ENCODE measurements at regions of chr10 and their contacts with region 1.

Region 1: GRCh38 chr10:77165445-77166208 is 472.0 kb downstream of the KCNMA1 start:
- H3K4me3 ChIP-seq: no peak overlapping the region
- H3K27ac ChIP-seq: no peak overlapping the region
- H3K4me1 ChIP-seq: peaks cover 4% of the 10 kb centered on the region; the same call in 1 of the 2 replicates
- CTCF ChIP-seq: peak; percentile 67

Region 2: DNA sequence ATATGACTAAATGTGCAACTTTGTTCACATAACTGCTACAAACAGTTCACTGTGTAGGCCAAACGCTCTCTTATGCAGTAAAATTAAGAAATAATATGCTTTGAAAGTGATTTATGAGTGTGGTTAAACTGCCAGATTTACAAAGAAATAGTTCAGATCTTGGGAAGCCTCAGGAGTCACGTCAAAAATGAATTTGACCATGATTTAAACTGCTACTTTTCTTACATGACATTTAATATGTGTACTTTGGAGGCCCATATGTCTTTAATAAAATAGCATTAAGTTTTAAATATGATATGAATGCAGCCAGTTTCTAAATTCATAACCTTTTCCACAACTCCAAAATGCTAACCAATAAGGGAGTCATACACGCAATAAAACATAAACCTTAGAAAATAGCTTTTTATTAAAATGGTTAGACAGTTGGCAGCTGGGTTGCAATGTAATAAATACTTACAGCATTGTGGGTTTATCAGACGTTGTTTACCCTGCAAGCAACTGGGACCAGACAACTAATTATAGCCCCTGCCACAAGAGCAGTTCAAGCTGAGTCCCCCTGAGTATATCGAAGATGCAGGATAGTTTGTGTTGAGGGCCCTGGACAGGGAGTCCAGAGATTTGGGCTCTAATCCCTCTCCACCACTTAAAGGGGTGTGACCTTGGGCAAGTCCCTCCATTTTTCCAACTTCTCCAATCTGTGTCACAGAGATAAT is 1093.8 kb before region 1 on chr10:
- CTCF ChIA-PET with region 1: no interaction called
- POLR2A ChIA-PET with region 1: no interaction called
- H3K4me3 ChIP-seq: no peak overlapping the region
- H3K27ac ChIP-seq: no peak overlapping the region
- H3K4me1 ChIP-seq: no peaks in the 10 kb centered on the region
- CTCF ChIP-seq: no peak

Region 3: GRCh38 chr10:77188521-77188920 is 22.9 kb after region 1 on chr10:
- CTCF ChIA-PET with region 1: interaction called, 10 read pairs
- POLR2A ChIA-PET with region 1: no interaction called
- H3K4me3 ChIP-seq: no peak overlapping the region
- H3K27ac ChIP-seq: no peak overlapping the region
- H3K4me1 ChIP-seq: peaks cover 4% of the 10 kb centered on the region
- CTCF ChIP-seq: no peak

Region 4: DNA sequence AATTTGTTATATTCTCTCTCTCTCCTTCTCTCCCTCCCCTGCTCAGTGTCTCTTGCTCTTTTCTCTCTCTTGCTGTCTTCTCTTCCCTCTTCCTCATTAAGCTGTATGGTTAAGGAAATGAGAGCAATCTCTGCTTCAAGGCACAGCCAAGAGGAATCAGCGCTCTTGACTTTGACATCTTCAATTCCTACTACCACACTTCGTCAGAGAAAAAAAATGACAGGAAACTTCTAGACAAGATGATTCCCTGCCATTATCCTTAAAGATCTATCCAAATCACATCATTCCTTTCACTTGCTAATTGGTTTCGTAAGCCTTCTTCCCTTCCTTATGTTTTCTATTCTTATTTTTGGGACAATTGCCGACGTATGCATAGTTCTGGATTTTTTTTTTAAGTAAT is 47.0 kb after region 1 on chr10:
- CTCF ChIA-PET with region 1: no interaction called
- POLR2A ChIA-PET with region 1: no interaction called
- H3K4me3 ChIP-seq: no peak overlapping the region
- H3K27ac ChIP-seq: no peak overlapping the region
- H3K4me1 ChIP-seq: no peaks in the 10 kb centered on the region
- CTCF ChIP-seq: no peak